Right ventricle myocardium inferior (tissue), 1 donor: ENCODE measurements at regions of chr22 and their contacts with region 1.

Region 1: GRCh38 chr22:49960159-49961004 is at the start of gene PIM3:
- DNase-seq: peak; percentile 97
- ATAC-seq: peak; percentile 88
- total RNA-seq, gene PIM3: 56.9 TPM

Region 2: DNA sequence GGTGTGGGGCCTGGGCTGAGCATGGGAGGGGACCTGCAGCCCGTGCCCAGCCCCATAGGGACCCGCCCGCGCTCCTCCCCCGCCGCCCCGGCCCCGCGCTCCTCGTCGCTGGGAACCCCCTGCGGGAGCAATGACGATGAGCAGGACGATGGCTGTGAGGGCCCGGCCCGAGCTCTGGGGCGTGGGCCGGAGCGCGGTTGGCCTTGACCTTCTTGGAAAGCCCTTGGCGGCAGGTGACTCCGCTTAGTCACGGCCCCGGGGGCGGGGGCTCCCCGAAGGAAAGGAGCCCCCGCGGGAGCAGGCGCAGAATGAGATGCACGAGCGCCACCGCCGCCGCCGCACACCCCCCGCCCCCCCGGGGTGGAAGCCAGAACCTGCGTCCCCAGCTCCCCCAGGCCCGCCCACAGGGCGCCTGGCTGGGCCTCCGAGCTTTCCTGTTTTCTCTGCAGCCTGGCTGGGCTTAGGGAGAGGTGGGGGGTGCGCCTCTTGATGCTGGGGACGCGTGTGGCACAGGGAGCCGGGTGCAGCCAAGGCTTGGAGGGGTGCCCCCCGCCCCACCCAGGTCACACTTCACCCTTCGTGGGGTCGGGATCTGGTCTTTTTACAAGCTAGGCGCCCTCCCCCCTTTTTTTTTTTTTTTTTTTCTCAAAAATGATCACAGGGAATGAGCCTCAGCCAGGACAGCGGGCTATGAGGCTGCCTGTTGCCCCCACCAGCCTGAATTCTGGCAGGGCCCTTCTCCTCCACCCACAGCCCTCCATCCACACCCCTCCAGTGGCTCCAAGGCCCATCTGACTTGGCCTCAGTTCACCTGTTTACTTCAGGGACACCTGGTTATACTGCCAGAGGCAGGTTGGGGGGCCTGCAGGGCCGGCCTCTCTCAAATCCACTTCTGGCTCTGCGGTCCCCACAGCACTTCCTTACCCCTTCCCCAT is 24.1 kb before region 1 on chr22:
- intact Hi-C with region 1: loop called (anchors 1 kb)
- DNase-seq: peak; percentile 96
- ATAC-seq: peak; percentile 59

Region 3: GRCh38 chr22:49999063-49999945 is 38.9 kb after region 1 on chr22:
- intact Hi-C with region 1: no loop called
- DNase-seq: no peak
- ATAC-seq: no peak